ENCODE measurements at regions of chr7 and their contacts with region 1.

Region 1: GRCh38 chr7:150903606-150904005 is 51.3 kb downstream of the AOC1 start:
- DNase-seq: peak; percentile 40
- H3K4me3 ChIP-seq: no peak overlapping the region
- H3K27ac ChIP-seq: peak overlapping the region in 1 of 2 experiments; percentile 12; a peak in 1 of 4 replicates
- H3K4me1 ChIP-seq: peaks cover 11 to 35% of the 10 kb centered on the region in 2 experiments; a peak in 3 of 4 replicates
- H3K27me3 ChIP-seq: no peaks in the 10 kb centered on the region
- CTCF ChIP-seq: no peak
- EP300 ChIP-seq: peak in 1 of 2 experiments; percentile 81; a peak in 2 of 4 replicates
- RAD21 ChIP-seq: no peak

Region 2: DNA sequence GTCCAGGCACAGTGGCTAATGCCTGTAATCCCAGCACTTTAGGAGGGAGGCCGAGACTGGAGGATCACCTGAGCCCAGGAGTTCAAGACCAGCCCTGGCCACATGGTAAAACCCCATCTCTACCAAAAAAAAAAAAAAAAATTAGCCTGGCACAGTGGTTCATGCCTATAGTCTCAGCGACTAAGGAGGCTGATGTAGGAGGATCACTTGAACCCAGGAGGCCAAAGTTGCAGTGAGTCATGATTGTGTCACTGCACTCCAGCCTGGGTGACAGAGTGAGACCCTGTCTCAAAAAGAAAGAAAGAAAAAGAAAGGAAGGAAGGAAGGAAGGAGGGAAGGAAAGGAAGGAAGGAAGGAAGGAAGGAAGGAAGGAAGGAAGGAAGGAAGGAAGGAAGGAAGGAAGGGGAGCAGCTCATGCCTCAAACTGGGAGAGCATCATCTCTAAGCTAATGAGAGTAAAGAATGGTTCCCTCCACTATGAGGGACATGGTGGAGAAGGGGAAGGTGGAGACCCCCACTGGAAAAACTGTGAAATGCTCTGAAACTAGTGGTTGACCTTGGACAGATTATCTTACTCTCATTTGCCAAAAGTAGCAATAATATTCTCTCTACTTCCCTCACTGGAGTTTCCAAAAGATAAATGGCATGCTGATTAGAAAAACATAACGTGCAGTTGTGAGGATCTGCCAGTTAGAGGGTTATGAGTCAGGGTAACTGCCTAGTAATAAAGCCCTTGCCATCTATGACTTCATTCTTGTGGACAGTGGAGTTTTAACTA is 149.6 kb before region 1 on chr7:
- CTCF ChIA-PET with region 1: no interaction called
- POLR2A ChIA-PET with region 1: no interaction called
- DNase-seq: peak; percentile 68
- H3K4me3 ChIP-seq: no peak overlapping the region
- H3K27ac ChIP-seq: no peak overlapping the region
- H3K4me1 ChIP-seq: no peaks in the 10 kb centered on the region
- H3K27me3 ChIP-seq: peaks cover 8% of the 10 kb centered on the region; the same call in 1 of the 2 replicates
- CTCF ChIP-seq: peak; percentile 45
- EP300 ChIP-seq: no peak
- RAD21 ChIP-seq: peak; percentile 65

Region 3: DNA sequence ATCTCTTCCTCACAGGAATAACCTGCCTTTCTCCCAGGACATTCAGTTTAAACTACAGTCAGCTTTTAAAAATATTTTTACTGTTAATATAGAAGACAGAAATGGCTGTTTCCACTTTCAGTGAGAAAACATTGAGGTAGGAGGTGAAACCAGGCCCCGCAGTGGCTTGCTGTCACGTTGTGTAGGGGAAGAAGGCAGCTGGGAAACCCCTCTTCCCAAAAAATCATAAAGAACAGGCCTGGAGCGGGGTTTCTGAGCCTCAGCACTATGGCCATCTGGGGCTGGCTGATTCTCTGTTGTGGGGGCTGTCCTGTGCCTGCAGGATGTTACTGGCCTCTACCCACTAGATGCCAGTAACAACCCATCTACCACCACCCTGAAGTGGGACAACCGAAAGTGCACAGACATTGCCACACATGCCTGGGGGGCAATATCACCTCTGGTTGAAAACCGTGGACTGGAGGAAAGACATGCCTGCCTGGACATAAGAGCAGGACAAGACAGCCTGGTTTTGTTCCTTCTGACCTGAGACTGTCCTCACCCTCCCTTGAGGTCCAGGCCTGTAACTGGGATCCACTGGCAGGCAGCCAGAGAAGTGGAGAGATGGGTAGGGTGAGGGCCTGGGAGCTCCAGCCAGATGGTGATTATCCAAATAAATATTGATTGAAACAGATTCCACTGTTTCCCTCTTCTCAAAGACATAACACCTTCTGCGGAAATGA is 30.6 kb after region 1 on chr7:
- CTCF ChIA-PET with region 1: interaction called, 72 read pairs
- POLR2A ChIA-PET with region 1: interaction called, 10 read pairs
- DNase-seq: peak; percentile 71
- H3K4me3 ChIP-seq: no peak overlapping the region
- H3K27ac ChIP-seq: peak overlapping the region in 1 of 2 experiments; percentile 75; a peak in 2 of 4 replicates
- H3K4me1 ChIP-seq: peaks cover 0 to 49% of the 10 kb centered on the region in 2 experiments; a peak in 2 of 4 replicates
- H3K27me3 ChIP-seq: peaks cover 25% of the 10 kb centered on the region; the same call in 1 of the 2 replicates
- CTCF ChIP-seq: no peak
- EP300 ChIP-seq: peak in 1 of 2 experiments; percentile 34; a peak in 1 of 4 replicates
- RAD21 ChIP-seq: peak; percentile 74